ENCODE measurements at regions of chr5 and their contacts with region 1.

Region 1: GRCh38 chr5:74640450-74640953 is at the start of gene ENC1:
- DNase-seq: peak; percentile 87 to 89
- ATAC-seq: peak; percentile 85 to 95 (median 89)
- H3K4me3 ChIP-seq: peak within 1 kb of the TSS; percentile 36 to 89 (median 81)
- H3K27ac ChIP-seq: peak within 1 kb of the TSS; percentile 61 to 97 (median 92)
- H3K4me1 ChIP-seq: peaks cover 5 to 67% (median 43%) of the 10 kb centered on the region in 9 donors
- H3K27me3 ChIP-seq: no peaks in the 10 kb centered on the region
- CTCF ChIP-seq: peak; percentile 44 to 70 (median 60)
- total RNA-seq, gene ENC1: 2.8 to 9.1 (median 4.0) TPM

Region 2: GRCh38 chr5:73792687-73793320 is 847.7 kb before region 1 on chr5:
- intact Hi-C with region 1: loop called in 3 of 10 experiments (anchors 5 to 10 kb)
- DNase-seq: peak; percentile 56 to 73
- ATAC-seq: peak; percentile 57 to 88 (median 80)
- H3K4me3 ChIP-seq: no peak overlapping the region
- H3K27ac ChIP-seq: no peak overlapping the region
- H3K4me1 ChIP-seq: peaks cover 0 to 36% (median 11%) of the 10 kb centered on the region in 9 donors
- H3K27me3 ChIP-seq: peaks cover 0 to 5% (median 0%) of the 10 kb centered on the region in 7 donors
- CTCF ChIP-seq: peak; percentile 90 to 99 (median 96)

Region 3: GRCh38 chr5:74056789-74057164 is 583.7 kb before region 1 on chr5:
- intact Hi-C with region 1: loop called in 1 of 10 experiments (anchors 5 kb)
- DNase-seq: no peak
- ATAC-seq: peak in 3 of 8 donors; percentile 33 to 63 (median 43)
- H3K4me3 ChIP-seq: no peak overlapping the region
- H3K27ac ChIP-seq: peak overlapping the region in 3 of 10 donors; percentile 37 to 50 (median 39)
- H3K4me1 ChIP-seq: peaks cover 0 to 28% (median 8%) of the 10 kb centered on the region in 9 donors
- H3K27me3 ChIP-seq: peaks cover 0 to 4% (median 0%) of the 10 kb centered on the region in 7 donors
- CTCF ChIP-seq: peak; percentile 14 to 63 (median 38)

Region 4: DNA sequence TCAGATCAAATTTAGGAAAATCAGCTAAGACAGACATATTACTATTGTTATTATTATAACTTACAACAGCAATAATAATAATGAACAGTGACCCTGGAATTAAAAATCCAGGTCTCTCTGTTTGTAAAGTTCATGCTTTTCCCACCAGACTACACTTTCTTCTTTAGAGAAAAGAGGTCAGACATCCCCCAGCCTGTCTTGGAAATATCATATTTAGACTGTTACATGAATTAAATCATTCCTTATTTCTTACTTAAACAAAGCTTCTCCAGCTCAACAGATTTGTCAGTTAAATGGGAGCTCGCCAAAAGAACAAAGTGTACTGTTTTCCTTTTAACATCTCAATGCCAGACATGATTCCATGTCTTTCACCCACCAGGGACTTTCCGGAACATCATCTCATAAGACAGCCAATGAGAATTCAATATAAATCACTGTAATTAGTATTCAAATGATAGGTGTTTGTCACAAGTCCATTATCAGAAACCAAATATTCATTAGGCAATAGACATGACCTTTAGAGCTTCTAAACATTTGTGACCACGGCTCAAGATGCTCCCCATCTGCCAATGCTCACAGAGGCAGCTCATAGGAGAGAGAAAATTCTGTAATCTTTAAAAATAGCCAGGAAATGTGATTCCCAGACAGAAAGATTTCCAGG is 351.9 kb before region 1 on chr5:
- intact Hi-C with region 1: loop called in 3 of 10 experiments (anchors 5 to 10 kb)
- DNase-seq: no peak
- ATAC-seq: peak in 6 of 8 donors; percentile 42 to 85 (median 63)
- H3K4me3 ChIP-seq: no peak overlapping the region
- H3K27ac ChIP-seq: peak overlapping the region in 8 of 10 donors; percentile 29 to 77 (median 53)
- H3K4me1 ChIP-seq: peaks cover 0 to 24% (median 10%) of the 10 kb centered on the region in 9 donors
- H3K27me3 ChIP-seq: no peaks in the 10 kb centered on the region
- CTCF ChIP-seq: no peak

Region 5: GRCh38 chr5:74433255-74433895 is 207.1 kb before region 1 on chr5:
- intact Hi-C with region 1: loop called in 1 of 10 experiments (anchors 2 kb)
- DNase-seq: no peak
- ATAC-seq: peak; percentile 58 to 85 (median 76)
- H3K4me3 ChIP-seq: peak overlapping the region in 5 of 10 donors; percentile 1 to 29 (median 7)
- H3K27ac ChIP-seq: peak overlapping the region in 9 of 10 donors; percentile 5 to 75 (median 63)
- H3K4me1 ChIP-seq: peaks cover 3 to 36% (median 22%) of the 10 kb centered on the region in 9 donors
- H3K27me3 ChIP-seq: no peaks in the 10 kb centered on the region
- CTCF ChIP-seq: no peak

Region 6: DNA sequence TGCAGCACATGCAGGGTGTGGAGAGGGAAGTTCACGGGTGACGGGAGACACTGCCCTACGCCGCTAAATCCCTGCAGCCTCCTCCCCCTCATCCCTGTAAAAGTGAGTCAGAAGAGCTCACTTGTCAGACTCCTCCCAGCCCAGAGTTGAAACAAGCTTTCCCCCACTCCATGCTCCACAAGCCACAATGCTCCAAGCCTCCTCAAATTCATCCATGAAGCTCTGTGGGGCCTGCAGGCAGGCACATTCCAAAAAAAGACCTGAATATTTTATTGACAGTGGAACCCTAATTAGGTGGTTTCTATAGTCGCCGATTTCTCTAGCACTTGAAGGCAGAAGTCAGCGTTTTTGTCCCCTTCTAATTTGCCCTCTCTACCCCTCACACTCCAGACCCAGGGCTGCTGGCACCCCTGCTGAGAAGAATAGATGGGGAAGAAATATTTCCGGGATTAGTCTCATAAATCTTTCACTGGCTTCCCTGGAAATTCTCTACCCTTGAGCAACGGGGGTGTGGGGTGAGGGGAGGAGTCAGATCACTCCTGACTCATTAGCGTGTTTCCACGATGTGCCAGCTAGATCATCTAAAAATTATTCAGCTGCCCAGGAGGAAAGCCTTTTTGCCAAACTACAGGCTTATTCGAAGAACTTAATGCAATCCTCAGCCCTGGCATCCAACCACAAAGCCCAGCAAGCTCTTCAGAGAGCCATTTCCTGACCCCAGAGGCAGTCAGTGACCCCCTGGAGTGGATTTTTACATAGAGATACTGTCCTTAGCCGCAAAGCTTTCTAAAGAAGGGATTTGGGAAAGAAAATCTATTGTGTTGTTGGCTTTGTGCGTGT is 97.1 kb before region 1 on chr5:
- intact Hi-C with region 1: loop called in 3 of 10 experiments (anchors 2 to 10 kb)
- DNase-seq: no peak
- ATAC-seq: peak in 2 of 8 donors; percentile 13 to 28
- H3K4me3 ChIP-seq: no peak overlapping the region
- H3K27ac ChIP-seq: peak overlapping the region in 1 of 10 donors; percentile 60
- H3K4me1 ChIP-seq: peaks cover 0 to 27% (median 16%) of the 10 kb centered on the region in 9 donors
- H3K27me3 ChIP-seq: peaks cover 0 to 8% (median 0%) of the 10 kb centered on the region in 7 donors
- CTCF ChIP-seq: no peak

Measured in heart right ventricle (tissue), 16 donors.